Motor neuron (in vitro differentiated cells): ENCODE measurements at regions of chr4 and their contacts with region 1.

Region 1: GRCh38 chr4:122552898-122553297 is 68.0 kb downstream of the IL21 start:
- ATAC-seq: no peak
- H3K4me3 ChIP-seq: no peak overlapping the region
- H3K27ac ChIP-seq: no peak overlapping the region
- H3K4me1 ChIP-seq: peaks cover 3 to 8% of the 10 kb centered on the region in 2 donors

Region 2: GRCh38 chr4:122309988-122310626 is 242.8 kb before region 1 on chr4:
- in situ Hi-C with region 1: loop called in 1 of 9 experiments (anchors 25 kb)
- ATAC-seq: no peak
- H3K4me3 ChIP-seq: no peak overlapping the region
- H3K27ac ChIP-seq: no peak overlapping the region
- H3K4me1 ChIP-seq: no peaks in the 10 kb centered on the region